Lower lobe of right lung (tissue), 2 donors: ENCODE measurements at regions of chr10 and their contacts with region 1.

Region 1: GRCh38 chr10:116796910-116797513 is 52.3 kb upstream of the ENO4 start:
- DNase-seq: peak; percentile 67
- ATAC-seq: peak; percentile 75 to 81
- H3K4me3 ChIP-seq: no peak overlapping the region
- H3K27ac ChIP-seq: no peak overlapping the region
- H3K4me1 ChIP-seq: no peaks in the 10 kb centered on the region
- H3K27me3 ChIP-seq: peaks cover 23% of the 10 kb centered on the region
- CTCF ChIP-seq: peak; percentile 88

Region 2: DNA sequence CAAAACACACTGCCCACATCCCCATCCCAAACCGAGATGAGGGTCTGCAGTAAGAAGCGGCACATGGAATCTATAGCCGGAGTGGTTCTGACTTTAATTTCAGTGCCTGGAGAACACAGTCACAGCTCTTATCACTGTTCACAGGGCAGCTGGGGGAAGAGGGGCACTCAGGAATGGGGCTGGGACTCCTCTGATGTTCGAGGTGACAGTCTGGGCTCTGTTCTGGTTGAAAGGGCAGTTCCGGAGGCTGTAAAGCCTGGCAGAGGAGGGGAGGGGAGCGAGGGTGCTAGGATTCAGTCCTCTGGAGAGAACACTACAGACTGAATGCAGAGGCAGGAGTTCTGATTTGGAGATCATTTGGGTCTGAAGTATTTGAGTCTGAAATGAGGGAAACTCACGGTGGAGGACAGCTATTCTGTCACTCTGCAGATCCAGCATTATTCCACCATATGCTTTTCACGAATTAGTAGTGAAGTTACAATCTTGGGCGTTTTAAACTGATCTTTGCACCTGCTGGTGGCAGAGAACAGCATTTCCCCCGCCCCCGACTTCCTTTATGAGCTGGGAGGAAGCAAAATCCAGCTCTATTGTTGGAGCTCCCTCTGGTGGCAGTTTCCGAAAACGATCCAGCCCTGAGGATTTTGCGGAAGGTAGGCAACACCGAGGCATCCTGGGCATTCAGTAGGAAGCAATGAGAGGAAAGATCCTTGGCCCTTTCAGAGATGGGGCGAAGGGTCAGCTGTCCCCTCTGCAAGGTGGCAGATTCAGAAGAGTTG is 377.6 kb after region 1 on chr10:
- intact Hi-C with region 1: loop called (anchors 10 kb)
- DNase-seq: peak; percentile 79
- ATAC-seq: peak; percentile 93 to 96
- H3K4me3 ChIP-seq: peak overlapping the region; percentile 59
- H3K27ac ChIP-seq: no peak overlapping the region
- H3K4me1 ChIP-seq: peaks cover 11% of the 10 kb centered on the region
- H3K27me3 ChIP-seq: peaks cover 55% of the 10 kb centered on the region
- CTCF ChIP-seq: peak; percentile 86